HEK293 (cell line): ENCODE measurements at regions of chr1 and their contacts with region 1.

Region 1: DNA sequence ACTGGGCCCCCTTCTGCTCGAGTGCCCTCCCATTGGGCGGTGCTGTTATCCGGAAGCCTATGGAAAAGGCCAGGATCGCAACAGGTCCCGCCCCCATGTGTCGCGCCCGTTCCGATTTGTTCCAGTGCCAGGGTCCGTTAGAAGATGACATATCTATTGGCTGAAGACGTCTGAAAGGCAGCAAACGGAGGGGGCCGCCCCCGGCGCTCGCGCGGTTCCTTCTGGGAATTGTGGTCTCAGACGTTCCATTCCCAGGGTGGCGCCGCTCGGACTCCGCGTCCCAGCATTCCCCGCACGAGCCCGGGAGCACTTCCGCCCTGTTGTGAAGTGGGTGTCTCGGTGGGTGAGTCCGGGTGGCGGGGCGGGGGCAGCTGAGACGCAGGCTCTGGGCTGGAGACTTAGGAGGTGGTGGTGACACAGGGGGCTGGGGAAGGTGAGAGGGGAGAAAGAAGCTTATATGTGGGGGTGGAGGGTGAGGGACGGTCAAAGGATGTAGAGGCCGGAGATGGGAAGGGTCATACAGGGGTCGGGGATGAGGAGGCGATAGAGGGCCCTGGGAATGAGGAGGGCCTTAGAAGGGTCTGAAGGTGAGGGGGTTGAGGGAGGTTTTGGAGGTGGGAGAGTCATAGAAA is at the start of gene ZSCAN20:
- H3K4me3 ChIP-seq: peak within 1 kb of the TSS; percentile 81
- H3K27ac ChIP-seq: peak within 1 kb of the TSS; percentile 12; the same call in 1 of the 2 replicates
- H3K4me1 ChIP-seq: no peaks in the 10 kb centered on the region
- CTCF ChIP-seq: no peak

Region 2: DNA sequence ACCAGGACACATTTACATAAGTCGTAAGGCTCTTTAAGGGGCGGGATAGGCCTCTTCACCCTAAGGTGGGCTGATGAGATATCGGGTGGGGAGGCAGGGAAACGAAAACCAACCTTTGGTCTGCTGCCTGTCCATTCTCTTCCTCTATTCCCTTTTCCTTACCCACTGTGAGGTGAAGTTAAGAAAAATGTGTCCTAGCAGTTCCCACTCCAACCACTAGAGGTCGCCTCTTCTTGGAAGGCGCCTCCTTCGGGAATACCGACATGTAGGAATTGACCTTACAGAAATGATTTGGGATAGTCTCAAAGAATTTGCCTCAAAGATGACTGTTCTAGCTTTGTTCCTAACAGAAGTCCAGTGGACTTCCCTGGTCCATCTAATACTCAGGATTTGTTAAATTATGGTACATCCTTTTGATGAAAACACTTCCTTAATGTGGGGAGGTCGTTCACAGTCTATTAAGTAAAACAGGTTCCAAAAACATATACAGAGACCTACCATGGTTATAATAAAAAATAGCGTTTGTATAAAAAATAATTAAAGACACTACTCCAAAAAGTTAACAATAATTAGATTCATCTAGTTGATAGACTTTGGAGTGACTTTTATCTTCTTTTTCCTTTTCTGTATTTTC is 377.4 kb before region 1 on chr1:
- CTCF ChIA-PET with region 1: interaction called, 13 read pairs
- POLR2A ChIA-PET with region 1: no interaction called
- H3K4me3 ChIP-seq: no peak overlapping the region
- H3K27ac ChIP-seq: no peak overlapping the region
- H3K4me1 ChIP-seq: no peaks in the 10 kb centered on the region
- CTCF ChIP-seq: peak; percentile 67; the same call in 1 of the 2 replicates

Region 3: GRCh38 chr1:33430692-33431593 is 41.5 kb before region 1 on chr1 and contains the start of gene PHC2:
- CTCF ChIA-PET with region 1: interaction called, 11 read pairs
- POLR2A ChIA-PET with region 1: no interaction called
- H3K4me3 ChIP-seq: peak within 1 kb of the TSS; percentile 68
- H3K27ac ChIP-seq: peak within 1 kb of the TSS; percentile 69; the same call in 1 of the 2 replicates
- H3K4me1 ChIP-seq: peaks cover 12% of the 10 kb centered on the region
- CTCF ChIP-seq: no peak; the same call in 1 of the 2 replicates

Region 4: DNA sequence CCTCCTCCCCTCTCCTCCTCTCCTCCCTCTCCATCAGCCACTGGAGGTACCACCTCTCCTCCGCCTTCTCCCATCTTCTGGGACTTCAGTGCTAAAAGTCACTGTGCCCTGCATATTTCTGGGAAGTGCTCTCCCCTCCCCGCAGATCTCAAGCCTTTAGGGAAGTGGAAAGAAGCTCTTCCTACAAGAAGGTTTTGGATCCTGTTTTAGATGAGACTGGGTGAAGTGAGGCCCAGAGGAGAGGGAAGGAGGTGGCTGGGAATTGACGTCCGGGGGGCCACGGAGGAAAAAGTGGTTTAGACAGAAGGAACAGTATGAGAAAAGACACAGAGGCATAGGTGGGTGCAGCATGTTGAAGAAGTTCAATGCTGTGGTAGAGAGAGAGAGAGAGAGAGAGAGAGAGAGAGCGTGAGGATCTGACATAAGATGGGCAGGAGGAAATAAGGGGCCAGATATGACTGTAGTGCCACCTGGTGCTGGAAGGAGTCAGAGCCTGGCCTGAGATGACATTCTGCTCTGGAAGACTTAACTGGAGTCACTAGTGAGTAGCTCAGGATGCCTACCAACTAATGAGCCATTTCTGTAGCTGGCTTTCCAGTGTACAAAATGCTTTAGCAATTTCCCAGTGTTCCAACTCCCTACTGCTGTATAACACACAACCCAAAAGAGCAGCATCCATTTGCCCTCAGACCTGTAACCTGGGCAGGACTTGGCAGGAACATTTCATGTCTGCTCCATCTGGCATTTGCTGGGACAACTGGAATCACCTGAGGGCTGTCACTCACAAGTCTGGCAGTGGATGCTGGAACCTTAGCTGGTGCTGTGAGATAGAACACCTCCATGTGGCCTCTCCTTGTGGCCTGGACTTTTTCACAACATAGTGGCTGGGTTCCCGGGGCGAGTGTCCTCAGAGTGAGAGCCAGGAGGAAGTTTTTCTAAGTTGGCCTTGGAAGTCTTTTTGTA is 16.6 kb before region 1 on chr1:
- CTCF ChIA-PET with region 1: interaction called, 33 read pairs
- POLR2A ChIA-PET with region 1: interaction called, 3 read pairs
- H3K4me3 ChIP-seq: no peak overlapping the region
- H3K27ac ChIP-seq: no peak overlapping the region
- H3K4me1 ChIP-seq: no peaks in the 10 kb centered on the region
- CTCF ChIP-seq: peak; percentile 91

Region 5: GRCh38 chr1:33460947-33461629 is 11.4 kb before region 1 on chr1:
- CTCF ChIA-PET with region 1: interaction called, 33 read pairs
- POLR2A ChIA-PET with region 1: interaction called, 3 read pairs
- H3K4me3 ChIP-seq: no peak overlapping the region
- H3K27ac ChIP-seq: no peak overlapping the region
- H3K4me1 ChIP-seq: no peaks in the 10 kb centered on the region
- CTCF ChIP-seq: no peak

Region 6: GRCh38 chr1:33517596-33518250 is 45.3 kb after region 1 on chr1:
- CTCF ChIA-PET with region 1: no interaction called
- POLR2A ChIA-PET with region 1: no interaction called
- H3K4me3 ChIP-seq: no peak overlapping the region
- H3K27ac ChIP-seq: no peak overlapping the region
- H3K4me1 ChIP-seq: no peaks in the 10 kb centered on the region
- CTCF ChIP-seq: no peak

Region 7: DNA sequence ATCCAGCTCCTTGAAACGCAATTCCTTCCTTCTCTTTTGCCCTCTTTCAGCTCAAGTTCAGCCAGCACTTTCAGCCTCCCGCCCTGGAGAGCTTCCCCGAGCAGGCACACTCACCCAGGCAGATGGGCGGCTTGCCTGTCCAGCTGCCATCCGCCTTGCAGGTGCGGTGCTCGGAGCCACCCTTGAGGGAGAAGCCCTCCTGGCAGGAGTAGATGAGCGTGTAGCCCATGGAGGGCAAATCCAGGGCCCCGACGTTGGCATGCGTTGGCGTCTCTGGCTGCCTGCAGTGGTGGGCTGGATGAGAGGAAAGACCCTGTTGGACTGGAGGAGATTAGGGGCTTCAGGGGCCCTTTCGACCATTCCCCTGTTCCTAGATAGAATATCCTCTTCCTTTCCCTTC is 60.5 kb after region 1 on chr1:
- CTCF ChIA-PET with region 1: no interaction called
- POLR2A ChIA-PET with region 1: no interaction called
- H3K4me3 ChIP-seq: no peak overlapping the region
- H3K27ac ChIP-seq: no peak overlapping the region
- H3K4me1 ChIP-seq: no peaks in the 10 kb centered on the region
- CTCF ChIP-seq: no peak

Region 8: GRCh38 chr1:33610864-33611455 is 138.5 kb after region 1 on chr1:
- CTCF ChIA-PET with region 1: interaction called, 27 read pairs
- POLR2A ChIA-PET with region 1: no interaction called
- H3K4me3 ChIP-seq: no peak overlapping the region
- H3K27ac ChIP-seq: no peak overlapping the region
- H3K4me1 ChIP-seq: no peaks in the 10 kb centered on the region
- CTCF ChIP-seq: no peak